ENCODE measurements at regions of chr3 and their contacts with region 1.

Region 1: DNA sequence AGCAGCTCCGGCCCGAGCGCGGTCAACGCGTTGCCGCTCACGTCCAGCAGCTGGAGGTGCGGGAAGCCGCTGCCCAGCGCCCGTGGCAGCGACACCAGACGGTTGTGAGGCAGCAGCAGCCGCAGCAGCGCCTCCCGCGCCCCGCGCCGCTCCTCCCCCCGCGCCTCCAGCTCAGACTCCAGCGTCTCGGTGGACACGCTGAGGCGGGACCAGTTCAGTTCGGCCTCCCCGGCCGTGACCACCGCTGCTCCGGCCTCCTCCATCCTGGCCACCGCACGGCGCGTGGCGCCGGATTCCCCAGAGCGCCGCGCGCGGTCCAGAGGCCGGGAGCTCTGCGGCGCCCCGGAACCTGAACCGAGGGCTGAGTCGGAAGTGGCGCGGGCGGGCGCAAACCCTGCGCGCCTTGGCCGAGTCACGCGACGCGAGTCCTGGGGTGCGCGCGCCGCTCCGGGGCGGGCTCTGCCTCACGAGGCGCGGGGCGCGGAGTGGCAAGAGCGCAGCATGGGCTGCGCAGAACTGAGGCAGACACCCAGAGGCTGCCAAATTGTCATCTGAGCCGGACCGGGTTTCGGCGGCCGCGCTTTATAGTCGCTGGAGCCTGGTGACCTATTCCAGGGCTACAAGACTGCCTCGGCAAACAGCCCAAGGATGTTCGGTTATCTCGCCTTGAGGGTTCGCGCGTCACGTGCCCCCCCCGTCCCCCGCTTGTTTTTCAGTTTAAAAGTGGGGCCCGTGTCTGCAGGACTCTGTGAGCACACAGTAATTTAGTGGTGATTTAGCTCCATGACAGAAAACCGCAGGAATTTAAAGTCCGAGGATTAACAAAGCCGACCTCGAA is at the start of gene LRRC58:
- DNase-seq: peak; percentile 90
- ATAC-seq: peak; percentile 92
- H3K4me3 Mint-ChIP-seq: peak within 1 kb of the TSS; percentile 97
- H3K27ac Mint-ChIP-seq: peak within 1 kb of the TSS; percentile 93
- H3K4me1 Mint-ChIP-seq: peaks cover 42% of the 10 kb centered on the region
- H3K27me3 Mint-ChIP-seq: no peaks in the 10 kb centered on the region
- CTCF ChIP-seq: no peak
- total RNA-seq, gene LRRC58: 16.8 and 18.3 TPM in 2 replicates

Region 2: DNA sequence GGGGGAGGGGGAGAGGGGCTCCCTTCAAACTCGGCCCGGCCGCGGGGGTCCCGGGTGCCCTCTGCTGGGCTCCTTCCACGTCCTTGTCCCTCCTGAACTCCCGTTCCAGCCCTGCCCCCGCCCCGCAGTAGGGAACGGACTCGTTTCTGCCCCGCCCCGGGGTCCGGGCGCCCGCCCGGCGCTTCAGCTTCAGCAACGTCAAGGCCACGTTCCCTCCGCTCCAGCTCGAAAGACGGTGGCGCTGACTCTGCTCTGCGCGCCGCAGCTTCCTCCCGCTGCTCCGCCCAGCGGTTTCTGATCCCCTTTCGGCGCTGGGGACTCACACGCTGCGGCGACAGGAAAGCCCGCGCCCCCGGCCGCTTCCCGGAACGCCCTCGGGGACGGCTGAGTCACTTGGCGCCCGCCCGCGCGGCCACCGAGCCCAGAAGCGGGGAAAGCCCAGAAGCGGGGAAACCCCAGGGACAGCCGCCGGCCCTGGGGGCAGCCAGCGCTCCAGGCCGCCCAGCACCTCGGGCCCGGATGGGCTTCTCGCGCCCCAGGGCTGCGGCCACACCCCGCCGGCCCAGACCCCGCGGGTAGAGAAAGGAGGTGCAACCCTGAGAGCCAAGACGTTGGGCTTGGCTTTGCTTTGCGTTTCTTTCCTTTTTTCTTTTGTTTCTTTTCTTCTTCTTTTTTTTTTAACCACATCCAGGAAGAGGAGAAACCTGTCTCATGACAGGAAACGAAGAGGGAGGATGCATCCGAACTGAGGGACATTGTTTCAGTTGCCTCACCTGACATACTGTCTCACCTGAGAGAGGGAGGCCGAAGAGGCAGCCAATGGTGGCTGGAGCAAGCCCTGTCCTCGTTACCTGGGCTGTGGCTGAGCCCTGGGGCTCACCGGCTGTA is 1026.1 kb before region 1 on chr3:
- CTCF ChIA-PET with region 1: no interaction called
- POLR2A ChIA-PET with region 1: no interaction called
- intact Hi-C with region 1: loop called (anchors 1 kb)
- DNase-seq: peak; percentile 96
- ATAC-seq: peak; percentile 87
- H3K4me3 Mint-ChIP-seq: peak overlapping the region; percentile 87
- H3K27ac Mint-ChIP-seq: peak overlapping the region; percentile 94
- H3K4me1 Mint-ChIP-seq: peaks cover 59% of the 10 kb centered on the region
- H3K27me3 Mint-ChIP-seq: no peaks in the 10 kb centered on the region
- CTCF ChIP-seq: no peak

Region 3: DNA sequence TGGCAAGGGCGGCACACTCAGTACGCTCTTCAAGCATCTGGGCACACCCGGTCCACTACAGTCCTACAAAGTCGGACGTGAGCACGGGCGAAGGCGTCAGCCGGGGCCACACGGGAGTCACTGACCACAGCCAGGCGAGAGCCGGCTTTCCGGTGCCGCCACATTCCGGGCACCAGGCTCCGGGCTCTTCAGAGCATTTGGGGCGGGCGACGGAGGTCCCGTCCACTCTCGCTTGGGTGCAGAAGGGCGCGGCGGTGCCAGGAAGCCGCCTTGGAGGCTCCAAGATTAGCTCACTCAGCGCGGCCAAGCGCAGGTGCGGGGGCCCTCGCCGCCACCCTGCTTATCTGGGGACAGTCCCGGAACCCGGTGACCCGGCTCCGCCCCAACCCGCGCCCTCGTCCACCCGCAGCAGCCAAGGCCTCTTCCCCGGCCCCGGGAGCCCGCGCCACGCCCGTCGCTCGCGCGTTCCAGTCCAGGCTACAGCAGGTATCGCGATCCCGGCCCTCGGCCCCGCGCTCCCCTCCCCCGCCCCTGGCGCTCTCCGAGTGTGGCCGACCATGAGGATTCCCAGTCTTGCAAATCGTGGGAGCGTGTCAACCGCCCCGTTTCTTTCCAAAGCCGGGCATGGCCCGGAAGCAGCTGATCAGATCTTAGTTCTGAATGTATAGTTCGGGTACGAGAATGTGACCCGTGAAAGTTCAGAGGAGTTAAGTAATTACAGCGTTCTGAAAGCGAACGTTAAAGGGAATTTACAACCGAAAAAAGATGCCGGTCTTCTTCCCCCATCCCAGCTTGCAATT is 769.6 kb before region 1 on chr3 and contains the start of gene ADPRH:
- CTCF ChIA-PET with region 1: no interaction called
- POLR2A ChIA-PET with region 1: no interaction called
- intact Hi-C with region 1: loop called (anchors 10 kb)
- DNase-seq: peak; percentile 76
- ATAC-seq: peak; percentile 76
- H3K4me3 Mint-ChIP-seq: peak within 1 kb of the TSS; percentile 97
- H3K27ac Mint-ChIP-seq: peak within 1 kb of the TSS; percentile 99
- H3K4me1 Mint-ChIP-seq: peaks cover 37% of the 10 kb centered on the region
- H3K27me3 Mint-ChIP-seq: no peaks in the 10 kb centered on the region
- CTCF ChIP-seq: no peak
- total RNA-seq, gene ADPRH: 41.2 and 43.8 TPM in 2 replicates

Region 4: DNA sequence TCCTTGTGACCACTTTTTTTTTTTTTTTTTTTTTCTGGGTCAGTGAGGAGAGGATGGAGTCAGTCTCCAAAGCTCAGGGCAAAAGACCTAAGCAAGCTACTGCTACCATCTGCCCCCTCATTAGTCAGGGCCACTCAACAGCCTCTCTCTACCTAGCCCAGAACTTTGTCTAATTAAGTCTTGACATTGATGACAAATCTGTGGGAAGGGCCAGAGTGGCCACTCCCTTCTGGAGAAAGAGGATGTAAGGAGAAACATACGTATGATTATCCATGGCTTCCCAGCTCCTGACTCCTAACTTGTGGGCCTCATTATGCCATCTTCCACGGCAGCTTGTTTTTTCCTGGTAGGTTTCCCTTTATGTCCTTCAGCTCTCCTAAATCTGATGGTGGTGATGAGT is 529.4 kb before region 1 on chr3:
- CTCF ChIA-PET with region 1: no interaction called
- POLR2A ChIA-PET with region 1: no interaction called
- intact Hi-C with region 1: loop called (anchors 10 kb)
- DNase-seq: no peak
- ATAC-seq: no peak
- H3K4me3 Mint-ChIP-seq: no peak overlapping the region
- H3K27ac Mint-ChIP-seq: no peak overlapping the region
- H3K4me1 Mint-ChIP-seq: no peaks in the 10 kb centered on the region
- H3K27me3 Mint-ChIP-seq: no peaks in the 10 kb centered on the region
- CTCF ChIP-seq: no peak

Region 5: GRCh38 chr3:120245386-120245785 is 103.8 kb before region 1 on chr3:
- CTCF ChIA-PET with region 1: interaction called, 3 read pairs
- POLR2A ChIA-PET with region 1: interaction called, 3 read pairs
- intact Hi-C with region 1: loop called (anchors 2 kb)
- DNase-seq: no peak
- ATAC-seq: no peak
- H3K4me3 Mint-ChIP-seq: no peak overlapping the region
- H3K27ac Mint-ChIP-seq: no peak overlapping the region
- H3K4me1 Mint-ChIP-seq: no peaks in the 10 kb centered on the region
- H3K27me3 Mint-ChIP-seq: peaks cover 22% of the 10 kb centered on the region
- CTCF ChIP-seq: no peak

Region 6: GRCh38 chr3:120284747-120285507 is 64.3 kb before region 1 on chr3 and contains the start of gene GPR156:
- CTCF ChIA-PET with region 1: no interaction called
- POLR2A ChIA-PET with region 1: no interaction called
- intact Hi-C with region 1: no loop called
- DNase-seq: no peak
- ATAC-seq: peak; percentile 14
- H3K4me3 Mint-ChIP-seq: peak within 1 kb of the TSS; percentile 25
- H3K27ac Mint-ChIP-seq: no peak within 1 kb of the TSS
- H3K4me1 Mint-ChIP-seq: peaks cover 4% of the 10 kb centered on the region
- H3K27me3 Mint-ChIP-seq: peaks cover 45% of the 10 kb centered on the region
- CTCF ChIP-seq: no peak
- total RNA-seq, gene GPR156: 0.24 TPM in 2 replicates

Region 7: DNA sequence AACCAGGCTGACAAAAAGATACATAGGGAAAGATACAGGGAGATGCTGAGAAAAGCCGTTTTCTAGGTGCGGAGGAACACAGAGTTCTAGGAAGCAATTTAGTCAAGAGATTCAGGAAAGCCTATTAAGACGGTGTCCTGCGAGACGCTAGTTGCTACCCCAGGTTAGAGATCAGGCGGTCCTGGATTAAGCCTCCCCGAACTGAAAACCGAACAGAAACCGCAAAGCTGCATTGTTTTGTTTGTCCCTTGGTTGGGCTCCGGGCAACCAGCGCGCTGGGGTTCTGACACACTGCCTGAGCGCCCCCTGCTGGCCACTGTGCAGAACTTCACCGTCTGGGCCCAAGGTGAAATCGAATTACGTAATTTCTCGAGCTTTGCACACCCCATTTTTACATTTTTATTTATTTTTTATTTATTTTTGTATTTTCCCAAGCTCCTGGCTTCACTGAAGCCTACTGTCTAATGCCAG is 209.6 kb after region 1 on chr3:
- CTCF ChIA-PET with region 1: no interaction called
- POLR2A ChIA-PET with region 1: no interaction called
- intact Hi-C with region 1: loop called (anchors 1 kb)
- DNase-seq: peak; percentile 74
- ATAC-seq: peak; percentile 86
- H3K4me3 Mint-ChIP-seq: peak overlapping the region; percentile 79
- H3K27ac Mint-ChIP-seq: peak overlapping the region; percentile 67
- H3K4me1 Mint-ChIP-seq: peaks cover 14% of the 10 kb centered on the region
- H3K27me3 Mint-ChIP-seq: peaks cover 18% of the 10 kb centered on the region
- CTCF ChIP-seq: peak; percentile 84

Region 8: GRCh38 chr3:120742198-120742849 is 393.1 kb after region 1 on chr3 and contains the starts of genes GTF2E1 and RABL3:
- CTCF ChIA-PET with region 1: no interaction called
- POLR2A ChIA-PET with region 1: interaction called, 8 read pairs
- intact Hi-C with region 1: loop called (anchors 1 kb)
- DNase-seq: peak; percentile 88
- ATAC-seq: peak; percentile 96
- H3K4me3 Mint-ChIP-seq: peak within 1 kb of the TSS; percentile 96
- H3K27ac Mint-ChIP-seq: peak within 1 kb of the TSS; percentile 97
- H3K4me1 Mint-ChIP-seq: peaks cover 36% of the 10 kb centered on the region
- H3K27me3 Mint-ChIP-seq: no peaks in the 10 kb centered on the region
- CTCF ChIP-seq: no peak
- total RNA-seq, gene GTF2E1: 22.1 and 22.9 TPM in 2 replicates
- total RNA-seq, gene RABL3: 29.7 and 29.9 TPM in 2 replicates